Sigmoid colon (tissue), 7 donors: ENCODE measurements at regions of chr16 and their contacts with region 1.

Region 1: GRCh38 chr16:68528686-68529379 is 10.3 kb upstream of the ZFP90 start:
- DNase-seq: peak; percentile 92
- H3K4me3 ChIP-seq: peak overlapping the region in 1 of 4 donors; percentile 17
- H3K27ac ChIP-seq: no peak overlapping the region
- H3K4me1 ChIP-seq: peaks cover 0 to 23% (median 17%) of the 10 kb centered on the region in 4 donors
- H3K27me3 ChIP-seq: no peaks in the 10 kb centered on the region
- CTCF ChIP-seq: peak; percentile 89 to 91 (median 90)
- EP300 ChIP-seq: no peak
- POLR2A ChIP-seq: no peak

Region 2: GRCh38 chr16:68800257-68800875 is 271.5 kb after region 1 on chr16:
- intact Hi-C with region 1: loop called (anchors 5 kb)
- DNase-seq: peak; percentile 71
- H3K4me3 ChIP-seq: no peak overlapping the region
- H3K27ac ChIP-seq: no peak overlapping the region
- H3K4me1 ChIP-seq: peaks cover 0 to 5% (median 0%) of the 10 kb centered on the region in 4 donors
- H3K27me3 ChIP-seq: no peaks in the 10 kb centered on the region
- CTCF ChIP-seq: peak; percentile 22 to 67 (median 56)
- EP300 ChIP-seq: no peak
- POLR2A ChIP-seq: no peak

Region 3: DNA sequence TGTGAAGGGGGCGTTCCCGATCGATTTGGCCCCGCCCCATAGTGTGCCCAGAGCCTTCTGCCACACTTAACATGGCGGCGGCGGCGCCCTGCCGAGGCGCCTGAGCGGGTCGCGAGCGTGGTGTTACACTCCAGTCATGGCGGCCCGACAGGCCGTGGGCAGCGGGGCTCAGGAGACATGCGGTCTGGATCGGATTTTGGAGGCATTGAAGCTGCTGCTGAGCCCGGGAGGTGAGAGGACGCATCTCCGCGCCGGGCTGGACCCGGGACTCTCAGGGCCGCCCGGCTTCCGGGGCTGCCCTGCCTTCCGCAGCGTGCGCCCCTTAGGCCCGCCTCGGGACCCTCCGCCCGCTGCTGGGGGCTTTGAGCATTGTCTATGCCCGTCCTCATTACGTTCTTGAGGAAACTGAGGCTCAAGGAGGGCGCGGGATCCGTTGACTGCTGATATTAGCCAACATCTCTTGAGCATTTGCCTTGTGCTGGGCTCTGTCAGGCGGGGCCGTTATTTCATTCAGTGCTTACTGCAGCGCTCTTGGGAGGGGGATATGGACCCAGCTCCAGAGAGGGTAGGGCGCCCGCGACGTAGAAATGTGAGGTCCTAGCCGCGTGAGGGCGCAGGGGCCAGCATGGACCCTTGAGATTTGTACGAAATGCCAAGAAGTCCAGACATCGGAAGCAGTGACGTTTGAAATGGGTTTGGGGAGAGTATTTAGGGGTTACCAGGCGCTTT is 314.8 kb after region 1 on chr16 and contains the start of gene TANGO6:
- intact Hi-C with region 1: loop called (anchors 5 kb)
- DNase-seq: peak; percentile 91
- H3K4me3 ChIP-seq: peak within 1 kb of the TSS; percentile 73 to 93 (median 90)
- H3K27ac ChIP-seq: peak within 1 kb of the TSS; percentile 84 to 94 (median 90)
- H3K4me1 ChIP-seq: peaks cover 0 to 35% (median 23%) of the 10 kb centered on the region in 4 donors
- H3K27me3 ChIP-seq: no peaks in the 10 kb centered on the region
- CTCF ChIP-seq: no peak
- EP300 ChIP-seq: no peak
- POLR2A ChIP-seq: peak in 1 of 2 donors; percentile 22
- total RNA-seq, gene TANGO6: 16.0 to 23.5 (median 20.0) TPM

Region 4: DNA sequence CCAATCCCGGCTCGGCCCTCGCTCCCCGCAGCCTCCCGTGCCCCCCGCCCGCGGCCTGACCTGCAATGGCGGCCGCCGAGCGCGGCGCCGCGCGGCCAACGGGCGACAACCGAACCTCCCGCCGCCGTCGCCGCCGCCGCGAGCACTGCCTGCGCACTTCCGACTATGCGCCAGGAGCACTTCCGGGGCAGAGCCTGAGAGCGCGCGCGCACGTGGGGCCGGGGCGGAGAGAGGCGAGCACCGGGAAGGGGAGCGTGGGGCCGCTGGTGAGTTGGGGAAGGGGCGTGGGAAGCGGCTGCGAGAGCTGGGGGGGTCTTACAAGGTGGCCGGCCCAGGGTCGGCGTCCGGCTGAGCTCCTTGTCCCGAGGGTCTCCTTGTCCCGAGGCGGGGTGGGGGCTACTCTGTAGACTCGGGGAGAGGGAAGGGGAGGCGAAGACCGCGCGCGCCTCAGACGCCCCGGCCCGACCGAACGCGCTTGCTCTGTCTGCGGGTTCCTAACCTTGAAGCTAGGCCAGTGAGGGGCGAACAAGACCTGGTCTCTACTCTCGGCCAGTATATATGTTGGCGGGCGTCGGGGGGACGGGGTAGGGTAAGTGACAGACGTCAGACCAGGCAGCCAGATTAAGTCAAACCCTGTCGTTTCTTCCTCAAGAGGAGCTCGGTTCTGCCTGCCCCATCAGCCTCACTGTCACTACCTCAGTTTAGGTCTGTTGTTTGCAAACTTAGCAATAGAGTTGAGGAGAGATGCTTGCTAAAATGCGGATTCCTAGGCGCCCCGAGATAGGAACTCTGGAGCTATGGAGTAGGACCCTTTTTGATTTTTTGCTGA is 603.8 kb after region 1 on chr16 and contains the starts of genes CHTF8 and UTP4:
- intact Hi-C with region 1: loop called (anchors 5 kb)
- DNase-seq: peak; percentile 93
- H3K4me3 ChIP-seq: peak within 1 kb of the TSS; percentile 82 to 98 (median 88)
- H3K27ac ChIP-seq: peak within 1 kb of the TSS; percentile 89 to 96 (median 90)
- H3K4me1 ChIP-seq: peaks cover 0 to 39% (median 24%) of the 10 kb centered on the region in 4 donors
- H3K27me3 ChIP-seq: no peaks in the 10 kb centered on the region
- CTCF ChIP-seq: no peak
- EP300 ChIP-seq: no peak
- POLR2A ChIP-seq: peak; percentile 47 to 61
- total RNA-seq, gene CHTF8: 46.3 to 79.2 (median 55.5) TPM
- total RNA-seq, gene UTP4: 24.6 to 37.5 (median 27.8) TPM